HEK293T (cell line): ENCODE measurements at regions of chr12 and their contacts with region 1.

Region 1: DNA sequence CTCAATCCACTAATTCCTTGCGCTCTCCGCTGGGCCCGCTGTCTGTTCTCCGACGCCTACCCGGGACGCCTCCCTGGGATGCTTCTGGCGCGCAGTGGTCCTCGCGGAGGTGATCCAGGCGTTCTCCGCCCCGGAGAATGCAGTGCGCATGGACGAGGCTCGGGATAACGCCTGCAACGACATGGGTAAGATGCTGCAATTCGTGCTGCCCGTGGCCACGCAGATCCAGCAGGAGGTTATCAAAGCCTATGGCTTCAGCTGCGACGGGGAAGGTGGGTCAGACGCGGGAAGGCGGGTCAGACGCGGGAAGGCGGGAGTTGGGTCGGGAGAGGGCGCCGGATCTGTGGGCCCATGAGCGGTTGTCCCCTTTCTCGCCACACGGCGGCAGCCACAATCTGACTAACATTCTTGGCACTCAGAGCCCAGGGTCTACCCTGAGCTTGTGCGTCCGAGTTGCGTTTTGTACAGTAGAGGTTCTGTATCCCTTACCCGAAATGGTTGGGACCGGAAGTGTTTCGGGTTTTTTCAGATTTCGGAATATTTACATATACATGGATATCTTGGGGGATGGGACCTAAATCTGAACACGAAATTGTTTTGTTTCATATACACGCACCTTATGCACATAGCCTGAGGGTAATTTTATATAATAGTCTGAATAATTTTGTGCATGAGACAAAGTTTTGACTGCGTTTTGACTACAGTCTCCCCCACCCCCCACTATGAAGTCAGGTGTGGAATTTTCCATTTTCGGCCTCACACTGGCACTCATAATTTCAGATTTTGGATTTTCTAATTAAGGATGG is 762 bp downstream of the C12orf57 start:
- DNase-seq: peak; percentile 74

Region 2: DNA sequence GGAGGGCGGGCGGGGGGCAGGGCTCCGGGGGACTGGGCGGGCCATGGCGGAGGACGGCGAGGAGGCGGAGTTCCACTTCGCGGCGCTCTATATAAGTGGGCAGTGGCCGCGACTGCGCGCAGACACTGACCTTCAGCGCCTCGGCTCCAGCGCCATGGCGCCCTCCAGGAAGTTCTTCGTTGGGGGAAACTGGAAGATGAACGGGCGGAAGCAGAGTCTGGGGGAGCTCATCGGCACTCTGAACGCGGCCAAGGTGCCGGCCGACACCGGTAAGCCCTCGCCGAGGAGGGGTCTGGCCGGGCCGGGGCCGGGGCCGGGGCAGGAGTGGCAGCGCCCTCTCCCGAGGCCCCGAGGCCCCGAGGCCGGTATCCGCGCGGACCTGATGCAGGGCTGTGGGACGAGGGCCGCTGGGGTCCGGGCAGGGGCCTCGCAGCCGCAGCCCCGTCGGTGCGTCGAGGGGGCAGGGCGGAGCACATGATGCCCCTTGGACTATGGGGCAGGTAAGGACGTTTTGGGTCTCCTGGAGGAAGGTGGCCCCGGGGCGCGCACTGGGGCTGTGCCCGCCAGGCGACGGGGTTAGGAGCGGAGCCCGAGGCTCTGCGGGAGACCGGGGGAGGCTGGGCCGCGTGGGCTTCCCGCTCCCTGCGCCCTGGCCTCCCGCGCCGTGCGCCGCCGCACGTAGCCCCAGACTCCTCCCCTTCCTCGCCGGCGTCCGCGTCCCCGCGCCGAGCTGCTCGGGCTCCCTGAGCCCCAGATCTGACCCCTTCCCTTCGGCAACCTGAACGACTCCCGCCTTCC is 77.0 kb before region 1 on chr12 and contains the start of gene TPI1:
- CTCF ChIA-PET with region 1: interaction called, 7 read pairs
- POLR2A ChIA-PET with region 1: interaction called, 63 read pairs
- DNase-seq: peak; percentile 91

Region 3: GRCh38 chr12:6904280-6905278 is 40.0 kb before region 1 on chr12 and contains the start of gene LRRC23:
- CTCF ChIA-PET with region 1: no interaction called
- POLR2A ChIA-PET with region 1: interaction called, 14 read pairs
- DNase-seq: peak; percentile 89

Region 4: GRCh38 chr12:6927379-6928024 is 17.1 kb before region 1 on chr12 and contains the start of gene ATN1:
- CTCF ChIA-PET with region 1: interaction called, 7 read pairs
- POLR2A ChIA-PET with region 1: interaction called, 174 read pairs
- DNase-seq: peak; percentile 54

Region 5: DNA sequence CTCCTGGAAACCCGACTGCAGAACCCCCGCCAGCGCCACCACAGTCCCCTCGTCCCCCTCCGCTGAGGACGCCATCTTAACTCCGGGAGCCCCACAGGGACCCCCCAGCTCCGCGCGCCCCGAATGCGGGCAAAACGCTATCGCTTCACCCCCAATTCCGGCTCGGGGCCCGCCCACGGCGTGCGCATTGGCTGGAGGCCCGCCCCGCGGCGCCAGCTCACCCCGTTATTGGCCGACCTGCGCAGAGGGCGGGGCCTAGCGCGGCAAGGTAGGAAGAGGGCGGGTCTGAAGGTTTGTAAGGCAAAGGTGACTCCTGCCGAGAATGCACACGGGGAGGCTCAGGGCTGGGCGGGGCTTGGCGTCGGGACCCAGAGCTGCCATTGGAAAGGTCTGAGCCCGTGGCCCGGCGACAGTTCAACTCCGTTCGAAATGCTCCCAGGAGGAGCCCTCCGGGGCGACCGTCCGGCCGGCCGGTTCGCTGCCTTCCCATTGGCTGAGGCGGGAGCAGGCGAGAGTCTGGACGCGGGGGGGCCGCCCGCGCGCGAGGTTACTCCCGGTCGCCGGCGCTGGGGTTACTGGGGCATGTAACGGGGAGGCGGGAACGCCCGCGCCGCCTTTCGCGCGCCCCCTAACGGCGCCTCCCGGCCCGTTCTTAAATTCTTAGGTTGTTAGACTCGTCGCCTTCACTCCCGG is 73.9 kb after region 1 on chr12 and contains the start of gene LPCAT3:
- CTCF ChIA-PET with region 1: no interaction called
- POLR2A ChIA-PET with region 1: interaction called, 15 read pairs
- DNase-seq: peak; percentile 93

Region 6: DNA sequence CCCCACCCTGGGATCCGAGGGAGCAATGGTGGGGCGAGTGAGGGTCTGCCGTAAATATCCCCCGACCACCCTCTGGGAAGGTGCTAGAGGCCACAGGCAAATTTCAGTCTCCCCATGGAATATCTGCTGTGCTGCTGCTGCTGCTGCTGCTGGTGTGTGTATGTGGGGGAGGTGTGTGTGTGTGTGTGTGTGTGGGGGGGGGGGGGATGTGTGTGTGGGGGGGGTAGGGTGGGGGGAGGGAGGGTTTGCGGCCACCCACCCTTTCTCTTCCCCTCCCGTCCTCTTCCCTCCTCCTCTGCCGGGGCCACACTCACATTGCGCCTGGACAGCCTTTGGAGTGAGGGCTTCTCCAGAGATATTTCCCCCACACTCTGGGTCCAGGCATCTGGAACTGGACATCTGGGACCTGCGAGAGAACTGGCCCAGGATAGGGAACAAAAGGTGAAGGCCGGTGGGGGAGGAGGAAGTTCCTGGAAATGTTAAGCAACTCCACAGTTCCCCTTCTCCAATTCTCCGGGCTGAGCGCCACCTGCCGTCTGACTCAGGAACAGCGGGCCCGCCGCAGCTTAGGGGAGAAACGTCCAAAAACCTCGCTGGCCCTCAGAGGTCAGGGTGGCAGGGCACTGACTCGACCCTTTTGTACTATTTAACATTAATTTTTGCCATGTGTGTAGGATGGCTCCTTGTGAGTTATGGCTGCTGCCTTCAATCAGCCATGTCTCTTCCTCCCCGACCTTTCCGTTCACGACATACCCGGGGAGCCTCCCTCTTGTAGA is 164.4 kb after region 1 on chr12 and contains the start of gene C1RL:
- CTCF ChIA-PET with region 1: interaction called, 10 read pairs
- POLR2A ChIA-PET with region 1: interaction called, 46 read pairs
- DNase-seq: peak; percentile 80